Natural killer cell (primary cell): ENCODE measurements at regions of chr12 and their contacts with region 1.

Region 1: GRCh38 chr12:53321074-53321814 is at the start of gene AAAS:
- DNase-seq: peak; percentile 92 to 96
- ATAC-seq: peak; percentile 85 to 94 (median 85)
- H3K4me3 ChIP-seq: peak within 1 kb of the TSS; percentile 80
- H3K4me3 Mint-ChIP-seq: peak within 1 kb of the TSS; percentile 99
- H3K27ac ChIP-seq: peak within 1 kb of the TSS; percentile 78
- H3K27ac Mint-ChIP-seq: peak within 1 kb of the TSS; percentile 94 to 98
- H3K4me1 ChIP-seq: peaks cover 37% of the 10 kb centered on the region
- H3K4me1 Mint-ChIP-seq: peaks cover 33 to 43% of the 10 kb centered on the region in 2 donors
- H3K27me3 ChIP-seq: no peaks in the 10 kb centered on the region
- H3K27me3 Mint-ChIP-seq: no peaks in the 10 kb centered on the region
- CTCF ChIP-seq: peak; percentile 99
- total RNA-seq, gene AAAS: 34.3 to 50.4 (median 45.0) TPM

Region 2: DNA sequence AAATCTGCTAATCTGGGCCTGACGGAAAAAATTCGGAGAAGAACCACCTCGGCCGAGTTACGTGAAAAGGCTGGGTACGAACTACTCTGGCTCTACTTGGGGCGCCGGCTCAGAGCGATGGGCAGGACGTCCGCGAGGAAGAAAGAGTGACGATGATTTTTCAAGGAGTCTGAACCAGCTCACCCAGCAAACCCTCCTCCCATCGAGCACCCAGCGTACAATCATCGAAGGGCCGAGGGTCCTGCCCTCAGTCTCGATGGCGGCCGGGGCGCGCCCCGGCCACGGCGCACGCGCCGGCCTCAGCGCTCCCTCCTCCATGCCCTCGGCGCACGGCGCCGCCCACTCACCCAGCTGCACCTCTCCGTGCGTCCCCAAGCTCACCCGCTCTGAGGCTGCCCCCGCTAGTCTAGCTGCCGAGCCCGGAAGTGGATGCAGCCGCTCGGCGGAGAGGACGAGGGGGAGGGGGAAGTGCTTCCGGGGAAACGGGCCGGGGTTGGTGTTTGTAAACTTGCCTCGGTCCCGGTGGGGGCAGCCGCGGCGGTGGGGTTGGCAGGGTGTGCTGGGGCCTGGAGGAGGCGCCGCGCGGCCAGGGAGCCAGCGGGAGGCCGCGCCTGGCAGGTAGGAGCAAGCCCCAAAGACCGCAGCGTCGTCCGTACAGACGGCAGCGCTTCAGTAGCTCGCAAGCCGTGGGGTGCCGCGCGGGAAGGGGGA is 140.9 kb before region 1 on chr12 and contains the starts of genes CSAD and ZNF740:
- intact Hi-C with region 1: loop called (anchors 1 kb)
- DNase-seq: peak; percentile 90 to 99
- ATAC-seq: peak; percentile 96 to 100 (median 97)
- H3K4me3 ChIP-seq: peak within 1 kb of the TSS; percentile 74
- H3K4me3 Mint-ChIP-seq: peak within 1 kb of the TSS; percentile 95
- H3K27ac ChIP-seq: peak within 1 kb of the TSS; percentile 91
- H3K27ac Mint-ChIP-seq: peak within 1 kb of the TSS; percentile 93 to 97
- H3K4me1 ChIP-seq: peaks cover 20% of the 10 kb centered on the region
- H3K4me1 Mint-ChIP-seq: peaks cover 34 to 51% of the 10 kb centered on the region in 2 donors
- H3K27me3 ChIP-seq: no peaks in the 10 kb centered on the region
- H3K27me3 Mint-ChIP-seq: no peaks in the 10 kb centered on the region
- CTCF ChIP-seq: no peak
- total RNA-seq, gene CSAD: 50.8 to 54.4 (median 53.0) TPM
- total RNA-seq, gene ZNF740: 37.1 to 65.9 (median 45.3) TPM

Region 3: GRCh38 chr12:53220801-53221202 is 100.4 kb before region 1 on chr12:
- intact Hi-C with region 1: loop called (anchors 1 kb)
- DNase-seq: peak; percentile 72 to 91
- ATAC-seq: peak; percentile 64 to 87 (median 75)
- H3K4me3 ChIP-seq: peak overlapping the region; percentile 83
- H3K4me3 Mint-ChIP-seq: peak overlapping the region; percentile 92
- H3K27ac ChIP-seq: peak overlapping the region; percentile 100
- H3K27ac Mint-ChIP-seq: peak overlapping the region; percentile 94 to 99
- H3K4me1 ChIP-seq: peaks cover 75% of the 10 kb centered on the region
- H3K4me1 Mint-ChIP-seq: peaks cover 72 to 92% of the 10 kb centered on the region in 2 donors
- H3K27me3 ChIP-seq: no peaks in the 10 kb centered on the region
- H3K27me3 Mint-ChIP-seq: no peaks in the 10 kb centered on the region
- CTCF ChIP-seq: no peak

Region 4: DNA sequence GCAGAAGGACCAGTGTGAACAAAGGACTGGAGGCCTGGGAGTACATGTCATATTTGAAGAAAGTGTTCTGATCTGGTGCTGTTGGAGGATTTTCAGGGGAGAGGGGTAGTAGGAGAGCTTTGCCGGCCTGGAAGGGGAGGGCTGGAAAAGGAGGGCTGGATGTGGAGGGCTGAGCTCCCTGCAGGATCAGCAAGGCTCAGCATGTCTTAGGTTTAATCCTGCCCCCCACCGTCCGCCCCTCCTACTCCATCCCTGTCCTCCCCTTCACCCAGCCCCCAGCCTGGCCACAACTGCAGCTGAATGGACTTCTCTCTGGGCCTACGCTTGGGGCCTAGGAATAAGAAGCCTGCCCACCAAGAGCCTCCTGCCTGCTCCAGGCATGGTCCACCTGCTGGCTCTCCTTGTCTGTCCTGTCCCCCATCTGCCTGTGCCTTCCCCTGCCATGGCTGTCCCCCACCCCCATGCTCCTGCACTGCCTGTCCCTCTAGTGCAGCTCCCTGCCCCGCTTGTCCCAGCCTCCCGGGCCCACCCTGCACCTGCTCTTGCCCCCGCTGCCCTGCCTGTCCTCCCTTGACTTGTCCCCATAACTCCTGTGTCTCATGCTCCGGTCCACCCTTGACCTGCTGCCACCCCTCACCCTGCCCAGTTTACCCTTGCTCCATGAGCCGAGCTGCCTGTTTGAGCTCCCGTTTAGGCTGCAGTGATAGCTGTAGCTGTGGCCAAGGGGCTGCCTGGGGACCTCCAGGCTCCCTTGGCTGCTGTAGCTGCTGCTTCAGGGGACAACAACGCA is 79.4 kb before region 1 on chr12:
- intact Hi-C with region 1: no loop called
- DNase-seq: no peak
- ATAC-seq: no peak
- H3K4me3 ChIP-seq: no peak overlapping the region
- H3K4me3 Mint-ChIP-seq: no peak overlapping the region
- H3K27ac ChIP-seq: no peak overlapping the region
- H3K27ac Mint-ChIP-seq: no peak overlapping the region
- H3K4me1 ChIP-seq: peaks cover 4% of the 10 kb centered on the region
- H3K4me1 Mint-ChIP-seq: peaks cover 1 to 2% of the 10 kb centered on the region in 2 donors
- H3K27me3 ChIP-seq: peaks cover 2% of the 10 kb centered on the region
- H3K27me3 Mint-ChIP-seq: peaks cover 8 to 15% of the 10 kb centered on the region in 2 donors
- CTCF ChIP-seq: no peak

Region 5: GRCh38 chr12:53344824-53345485 is 23.7 kb after region 1 on chr12:
- intact Hi-C with region 1: loop called (anchors 1 kb)
- DNase-seq: peak; percentile 65 to 85
- ATAC-seq: peak; percentile 88 to 91 (median 91)
- H3K4me3 ChIP-seq: peak overlapping the region; percentile 57
- H3K4me3 Mint-ChIP-seq: peak overlapping the region; percentile 99
- H3K27ac ChIP-seq: peak overlapping the region; percentile 43
- H3K27ac Mint-ChIP-seq: peak overlapping the region; percentile 73 to 84
- H3K4me1 ChIP-seq: peaks cover 14% of the 10 kb centered on the region
- H3K4me1 Mint-ChIP-seq: peaks cover 11 to 19% of the 10 kb centered on the region in 2 donors
- H3K27me3 ChIP-seq: no peaks in the 10 kb centered on the region
- H3K27me3 Mint-ChIP-seq: peaks cover 0 to 4% of the 10 kb centered on the region in 2 donors
- CTCF ChIP-seq: peak; percentile 68

Region 6: DNA sequence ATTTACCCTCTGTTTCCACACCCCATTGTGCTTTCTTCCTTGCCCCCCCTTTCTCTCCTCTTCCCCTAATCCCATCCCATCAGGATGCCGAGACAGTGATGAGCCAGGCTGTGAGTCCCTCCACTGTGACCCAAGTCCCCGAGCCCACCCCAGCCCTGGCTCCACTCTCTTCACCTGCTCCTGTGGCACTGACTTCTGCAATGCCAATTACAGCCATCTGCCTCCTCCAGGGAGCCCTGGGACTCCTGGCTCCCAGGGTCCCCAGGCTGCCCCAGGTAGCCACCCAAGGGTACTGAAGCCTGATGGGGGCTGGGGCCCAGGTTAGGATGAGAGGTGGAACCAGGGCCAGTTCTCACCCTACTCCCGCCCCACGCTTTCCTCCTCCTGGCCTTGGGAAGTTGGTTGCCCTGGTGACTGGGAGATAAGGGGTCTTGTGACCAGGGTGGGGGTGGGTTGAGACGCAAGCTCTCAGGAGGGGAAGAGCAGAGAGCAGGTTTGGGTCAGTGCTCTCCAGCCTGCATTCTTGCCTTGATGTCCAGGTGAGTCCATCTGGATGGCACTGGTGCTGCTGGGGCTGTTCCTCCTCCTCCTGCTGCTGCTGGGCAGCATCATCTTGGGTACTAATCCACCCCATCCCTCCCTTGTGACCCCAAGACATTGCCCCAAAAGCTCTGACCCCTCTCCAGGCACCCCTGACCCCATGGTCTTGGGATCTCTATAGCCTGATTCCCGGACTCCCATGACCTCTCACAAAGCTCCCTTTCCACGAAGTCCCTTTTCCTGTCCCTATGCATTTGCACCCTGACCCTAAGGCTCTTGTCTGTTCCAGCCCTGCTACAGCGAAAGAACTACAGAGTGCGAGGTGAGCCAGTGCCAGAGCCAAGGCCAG is 103.6 kb after region 1 on chr12:
- intact Hi-C with region 1: loop called (anchors 1 kb)
- DNase-seq: no peak
- ATAC-seq: no peak
- H3K4me3 ChIP-seq: no peak overlapping the region
- H3K4me3 Mint-ChIP-seq: no peak overlapping the region
- H3K27ac ChIP-seq: no peak overlapping the region
- H3K27ac Mint-ChIP-seq: no peak overlapping the region
- H3K4me1 ChIP-seq: peaks cover 4% of the 10 kb centered on the region
- H3K4me1 Mint-ChIP-seq: peaks cover 0 to 6% of the 10 kb centered on the region in 2 donors
- H3K27me3 ChIP-seq: no peaks in the 10 kb centered on the region
- H3K27me3 Mint-ChIP-seq: no peaks in the 10 kb centered on the region
- CTCF ChIP-seq: no peak